GM12878 (cell line): ENCODE measurements at regions of chr2 and their contacts with region 1.

Region 1: GRCh38 chr2:176669398-176670174 is 400.3 kb downstream of the MTX2 start:
- DNase-seq: peak; percentile 37
- ATAC-seq: peak; percentile 86
- H3K4me3 ChIP-seq: no peak overlapping the region
- H3K27ac ChIP-seq: peak overlapping the region; percentile 48; the same call in 1 of the 2 replicates
- H3K4me1 ChIP-seq: peaks cover 4% of the 10 kb centered on the region
- H3K27me3 ChIP-seq: no peaks in the 10 kb centered on the region
- CTCF ChIP-seq: no peak
- EP300 ChIP-seq: 0 out of 4 replicates have a peak, but pooled peaks of 1 of the 2 experiments have one; percentile 22
- POLR2A ChIP-seq: no peak
- RAD21 ChIP-seq: no peak

Region 2: DNA sequence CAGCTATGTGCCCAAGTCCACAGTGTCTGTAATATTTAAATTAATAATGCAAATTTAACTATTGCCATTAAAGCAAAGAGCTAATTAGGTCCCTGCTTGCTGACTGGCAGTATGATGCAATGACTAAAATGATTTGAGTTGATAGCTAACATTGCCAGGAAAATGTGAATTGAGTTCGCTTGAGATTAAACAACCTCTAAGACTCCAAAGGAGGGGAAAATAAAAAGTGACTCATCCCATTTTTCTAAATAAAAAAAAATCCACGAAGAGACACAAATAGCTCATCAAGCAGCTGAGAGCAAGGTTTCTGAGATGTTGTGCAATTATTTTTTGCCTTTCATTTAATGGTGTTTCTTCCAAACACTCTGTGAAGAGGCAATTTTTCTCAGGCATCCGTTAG is 12.7 kb after region 1 on chr2:
- CTCF ChIA-PET with region 1: interaction called, 5 read pairs
- POLR2A ChIA-PET with region 1: interaction called, 3 read pairs
- RAD21 ChIA-PET with region 1: interaction called, 8 read pairs
- SMC1A ChIA-PET with region 1: interaction called, 22 read pairs
- in situ Hi-C with region 1: no loop called
- intact Hi-C with region 1: no loop called
- DNase-seq: no peak
- ATAC-seq: no peak
- H3K4me3 ChIP-seq: no peak overlapping the region
- H3K27ac ChIP-seq: no peak overlapping the region
- H3K4me1 ChIP-seq: no peaks in the 10 kb centered on the region
- H3K27me3 ChIP-seq: no peaks in the 10 kb centered on the region
- CTCF ChIP-seq: no peak
- EP300 ChIP-seq: no peak
- POLR2A ChIP-seq: no peak
- RAD21 ChIP-seq: no peak

Region 3: DNA sequence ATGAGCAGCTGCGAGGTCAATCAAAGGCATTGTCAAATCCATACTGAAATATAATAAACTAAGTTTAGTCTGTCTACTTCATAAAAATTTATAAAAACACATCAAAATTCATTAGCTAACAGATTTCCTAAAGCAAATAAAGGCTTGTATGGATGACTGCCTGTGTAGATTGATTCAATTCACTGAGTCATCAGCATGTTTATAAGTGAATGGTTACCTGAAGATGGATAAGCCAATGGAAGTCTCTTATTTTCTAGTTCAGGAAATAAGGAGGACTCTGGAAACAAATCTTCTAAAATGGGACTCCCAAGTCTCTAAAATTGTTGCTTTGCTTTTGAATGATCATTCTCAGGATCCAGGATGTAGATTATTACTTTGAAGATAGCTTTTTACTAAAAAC is 486.0 kb after region 1 on chr2:
- CTCF ChIA-PET with region 1: no interaction called
- POLR2A ChIA-PET with region 1: no interaction called
- RAD21 ChIA-PET with region 1: no interaction called
- SMC1A ChIA-PET with region 1: no interaction called
- in situ Hi-C with region 1: loop called (anchors 5 kb)
- intact Hi-C with region 1: no loop called
- DNase-seq: no peak
- ATAC-seq: no peak
- H3K4me3 ChIP-seq: no peak overlapping the region
- H3K27ac ChIP-seq: no peak overlapping the region
- H3K4me1 ChIP-seq: no peaks in the 10 kb centered on the region
- H3K27me3 ChIP-seq: no peaks in the 10 kb centered on the region
- CTCF ChIP-seq: no peak
- EP300 ChIP-seq: no peak
- POLR2A ChIP-seq: no peak
- RAD21 ChIP-seq: no peak